MCF 10A (cell line): ENCODE measurements at regions of chr14 and their contacts with region 1.

Region 1: GRCh38 chr14:81315341-81315740 is 84.8 kb downstream of the STON2 start:
- DNase-seq: no peak
- H3K4me3 Mint-ChIP-seq: no peak overlapping the region
- H3K27ac Mint-ChIP-seq: peak overlapping the region; percentile 31
- H3K4me1 Mint-ChIP-seq: peaks cover 33% of the 10 kb centered on the region
- H3K27me3 Mint-ChIP-seq: no peaks in the 10 kb centered on the region
- CTCF ChIP-seq: no peak

Region 2: GRCh38 chr14:81301371-81301770 is 14.0 kb before region 1 on chr14:
- CTCF ChIA-PET with region 1: interaction called, 3 read pairs
- POLR2A ChIA-PET with region 1: interaction called, 14 read pairs
- intact Hi-C with region 1: no loop called
- DNase-seq: no peak
- H3K4me3 Mint-ChIP-seq: no peak overlapping the region
- H3K27ac Mint-ChIP-seq: no peak overlapping the region
- H3K4me1 Mint-ChIP-seq: peaks cover 17% of the 10 kb centered on the region
- H3K27me3 Mint-ChIP-seq: no peaks in the 10 kb centered on the region
- CTCF ChIP-seq: no peak

Region 3: DNA sequence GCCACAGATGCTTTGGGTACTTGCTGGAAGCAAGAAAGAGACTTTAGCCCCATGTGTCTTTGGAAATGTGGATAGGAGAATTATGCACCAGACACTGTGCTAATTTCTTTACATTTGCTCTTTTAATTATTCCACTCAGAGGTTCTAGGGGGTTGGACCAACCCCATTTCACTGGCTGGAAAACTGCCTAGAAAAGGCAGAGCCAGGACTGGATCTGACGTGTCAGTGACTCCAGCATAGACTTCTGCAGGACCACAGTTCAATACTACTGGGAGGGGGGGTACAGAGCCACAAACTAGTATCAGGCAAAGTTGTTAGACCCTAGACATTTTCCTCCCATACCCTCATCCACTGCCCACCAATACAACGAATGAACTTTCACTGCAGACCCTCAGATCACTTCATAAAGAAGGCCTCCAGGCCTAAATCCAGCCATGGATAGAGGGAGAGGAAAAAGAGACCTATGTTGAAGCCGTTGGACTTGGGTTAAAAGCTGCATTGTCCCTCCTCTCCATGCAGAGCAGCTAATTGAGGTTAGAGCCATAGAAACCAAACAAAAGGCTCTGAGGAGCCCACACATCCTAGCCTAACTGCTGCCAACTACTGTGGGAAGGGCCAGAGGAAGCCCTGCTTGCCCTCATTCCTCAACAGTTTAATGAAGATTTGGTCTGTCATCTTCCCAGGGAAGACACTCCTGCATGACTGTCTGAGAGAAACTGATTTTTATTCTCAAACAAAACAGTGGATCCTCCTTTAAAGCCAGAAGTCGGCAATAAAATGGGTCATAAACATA is 16.1 kb after region 1 on chr14:
- CTCF ChIA-PET with region 1: interaction called, 3 read pairs
- POLR2A ChIA-PET with region 1: interaction called, 13 read pairs
- intact Hi-C with region 1: no loop called
- DNase-seq: peak; percentile 24
- H3K4me3 Mint-ChIP-seq: no peak overlapping the region
- H3K27ac Mint-ChIP-seq: peak overlapping the region; percentile 84
- H3K4me1 Mint-ChIP-seq: peaks cover 23% of the 10 kb centered on the region
- H3K27me3 Mint-ChIP-seq: no peaks in the 10 kb centered on the region
- CTCF ChIP-seq: no peak